Gastrocnemius medialis (tissue), 4 donors: ENCODE measurements at regions of chr1 and their contacts with region 1.

Region 1: GRCh38 chr1:56578963-56579875 is at the start of gene PLPP3:
- DNase-seq: peak; percentile 81 to 83
- ATAC-seq: peak; percentile 75 to 80
- H3K4me3 ChIP-seq: peak within 1 kb of the TSS; percentile 73 to 99 (median 88)
- H3K27ac ChIP-seq: peak within 1 kb of the TSS; percentile 86 to 95 (median 88)
- H3K4me1 ChIP-seq: peaks cover 29 to 35% of the 10 kb centered on the region in 2 donors
- H3K27me3 ChIP-seq: no peaks in the 10 kb centered on the region
- CTCF ChIP-seq: peak in 3 of 5 experiments; percentile 26 to 44 (median 38)
- POLR2A ChIP-seq: peak; percentile 75 to 91
- total RNA-seq, gene PLPP3: 53.2 to 71.5 (median 55.5) TPM

Region 2: DNA sequence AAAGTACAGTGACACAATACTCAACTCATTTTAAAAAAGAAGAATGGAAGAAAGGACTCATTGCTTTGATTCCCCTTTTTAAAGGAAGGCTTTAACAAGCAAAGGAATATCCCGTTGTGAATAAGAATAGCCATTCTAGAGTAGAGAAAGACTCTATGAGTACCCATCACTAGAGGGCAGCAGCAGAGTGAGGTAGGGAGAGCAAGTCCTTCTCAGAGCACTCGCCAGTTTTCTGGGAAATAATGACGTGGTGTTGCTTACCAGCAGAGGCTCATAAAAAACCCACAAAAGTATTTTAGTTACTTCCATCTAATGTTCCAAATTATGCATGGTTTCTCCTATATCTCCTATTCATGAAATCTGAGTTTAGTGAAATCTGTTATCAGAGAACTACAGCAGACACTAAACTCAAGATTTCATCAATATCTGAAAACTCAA is 1438.7 kb before region 1 on chr1:
- in situ Hi-C with region 1: loop called in 3 of 4 experiments (anchors 10 to 25 kb)
- intact Hi-C with region 1: no loop called
- DNase-seq: peak; percentile 64 to 65
- ATAC-seq: peak; percentile 87 to 96
- H3K4me3 ChIP-seq: no peak overlapping the region
- H3K27ac ChIP-seq: peak overlapping the region in 3 of 4 donors; percentile 40 to 48 (median 45)
- H3K4me1 ChIP-seq: peaks cover 0 to 4% of the 10 kb centered on the region in 2 donors
- H3K27me3 ChIP-seq: no peaks in the 10 kb centered on the region
- CTCF ChIP-seq: peak; percentile 69 to 91 (median 78)
- POLR2A ChIP-seq: no peak

Region 3: GRCh38 chr1:55474168-55474786 is 1104.9 kb before region 1 on chr1:
- in situ Hi-C with region 1: loop called in 1 of 4 experiments (anchors 25 kb)
- intact Hi-C with region 1: no loop called
- DNase-seq: no peak
- ATAC-seq: peak in 1 of 2 donors; percentile 53
- H3K4me3 ChIP-seq: no peak overlapping the region
- H3K27ac ChIP-seq: no peak overlapping the region
- H3K4me1 ChIP-seq: no peaks in the 10 kb centered on the region
- H3K27me3 ChIP-seq: no peaks in the 10 kb centered on the region
- CTCF ChIP-seq: no peak
- POLR2A ChIP-seq: no peak

Region 4: DNA sequence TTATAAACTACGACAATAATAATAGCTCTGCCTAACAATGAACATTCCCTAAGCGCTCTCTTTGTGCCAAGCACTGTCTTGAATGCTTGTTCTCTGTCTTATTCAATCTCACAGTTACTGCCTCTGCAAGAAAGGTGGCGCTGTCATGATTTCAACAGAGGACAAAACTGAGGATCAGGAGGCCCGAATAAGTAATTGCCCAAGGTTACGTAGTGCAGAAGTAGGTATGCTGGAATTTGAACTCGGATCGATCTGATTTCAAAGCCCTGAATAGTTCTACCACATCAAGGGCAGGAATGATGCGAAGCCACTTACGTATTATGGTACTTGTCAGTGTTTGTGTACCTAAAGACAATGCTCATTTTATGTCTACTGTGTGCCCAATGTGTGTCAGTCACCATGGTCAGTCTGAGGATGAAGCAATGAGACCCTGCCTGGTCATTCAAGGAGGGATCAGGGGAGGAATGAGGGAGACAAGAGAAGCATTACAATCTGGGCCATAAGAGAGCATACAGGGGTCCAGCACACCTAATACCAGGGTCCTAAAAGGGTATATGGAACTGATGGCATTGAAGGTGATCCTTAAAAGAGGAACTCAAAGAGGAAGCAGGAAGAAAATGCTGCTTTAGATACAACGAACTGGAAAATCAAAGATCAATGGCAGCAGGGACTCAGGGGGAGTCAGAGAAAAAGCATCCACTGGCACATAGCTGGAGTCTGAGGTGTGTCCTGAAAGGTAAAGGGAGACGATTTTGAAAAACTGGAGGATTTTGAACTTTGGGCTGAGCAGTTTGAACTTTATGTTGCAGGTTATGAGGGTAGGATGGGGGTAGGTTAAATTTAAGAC is 389.1 kb before region 1 on chr1:
- in situ Hi-C with region 1: no loop called
- intact Hi-C with region 1: loop called (anchors 5 kb)
- DNase-seq: peak in 1 of 2 donors; percentile 25
- ATAC-seq: peak; percentile 42 to 74
- H3K4me3 ChIP-seq: no peak overlapping the region
- H3K27ac ChIP-seq: peak overlapping the region in 3 of 4 donors; percentile 36 to 43 (median 37)
- H3K4me1 ChIP-seq: peaks cover 24 to 27% of the 10 kb centered on the region in 2 donors
- H3K27me3 ChIP-seq: no peaks in the 10 kb centered on the region
- CTCF ChIP-seq: peak in 4 of 5 experiments; percentile 16 to 54 (median 47)
- POLR2A ChIP-seq: no peak

Region 5: DNA sequence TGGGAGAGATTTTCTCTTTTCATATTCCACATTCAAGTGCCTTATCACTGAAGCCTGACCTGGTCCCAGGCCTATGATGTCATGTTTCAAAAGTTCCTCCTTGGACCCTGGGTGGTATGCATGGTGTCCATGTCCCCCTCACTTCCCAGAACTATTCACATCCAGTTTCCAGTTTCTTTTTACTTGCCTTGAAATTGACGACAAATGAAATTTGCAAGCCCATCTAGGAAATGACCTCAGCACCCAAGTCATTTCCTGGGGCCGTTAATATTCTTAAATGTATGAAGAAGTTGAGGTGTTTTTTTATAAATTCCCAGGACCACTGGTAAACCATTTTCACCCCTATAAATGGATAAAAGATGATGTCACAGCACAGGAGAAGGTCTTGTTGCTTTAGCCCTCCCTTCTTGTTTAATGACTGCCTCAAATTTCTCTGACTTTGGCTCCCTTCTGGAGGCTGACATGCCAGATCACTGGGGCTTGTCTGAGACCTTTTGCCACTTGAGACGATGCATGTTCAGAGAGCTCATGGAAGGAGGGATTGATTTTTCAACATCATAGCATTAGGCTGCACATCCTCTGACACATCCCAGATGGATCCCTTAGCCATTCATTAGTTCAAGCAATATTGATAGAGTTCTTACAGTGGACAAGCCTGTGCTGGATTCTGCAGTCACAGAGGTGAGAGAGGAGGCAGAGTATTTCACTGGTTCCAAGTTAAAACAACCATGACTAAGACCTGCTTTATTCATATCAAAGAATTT is 221.1 kb before region 1 on chr1:
- in situ Hi-C with region 1: no loop called
- intact Hi-C with region 1: loop called (anchors 5 kb)
- DNase-seq: no peak
- ATAC-seq: no peak
- H3K4me3 ChIP-seq: no peak overlapping the region
- H3K27ac ChIP-seq: peak overlapping the region; percentile 73 to 92 (median 82)
- H3K4me1 ChIP-seq: peaks cover 50 to 54% of the 10 kb centered on the region in 2 donors
- H3K27me3 ChIP-seq: no peaks in the 10 kb centered on the region
- CTCF ChIP-seq: no peak
- POLR2A ChIP-seq: no peak

Region 6: DNA sequence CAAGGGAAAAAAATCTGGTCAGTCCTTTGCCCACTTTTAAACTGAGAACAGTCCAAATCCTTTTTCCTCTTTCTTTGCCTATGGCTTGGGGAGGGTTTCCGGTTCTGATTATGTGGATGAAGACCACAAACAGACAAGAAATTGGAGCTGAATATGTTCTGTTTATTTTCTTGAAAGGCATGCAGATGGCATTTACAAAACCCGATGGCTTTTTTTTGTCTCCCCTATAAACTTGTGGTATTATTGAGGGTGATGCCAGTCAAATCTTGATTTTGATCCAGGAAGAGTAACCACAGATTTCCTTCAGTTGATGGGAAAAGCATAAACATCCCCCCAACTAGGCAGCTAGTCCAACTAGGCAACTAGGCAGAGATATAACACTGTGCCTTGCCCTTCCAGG is 38.8 kb before region 1 on chr1:
- in situ Hi-C with region 1: no loop called
- intact Hi-C with region 1: loop called (anchors 5 kb)
- DNase-seq: no peak
- ATAC-seq: no peak
- H3K4me3 ChIP-seq: no peak overlapping the region
- H3K27ac ChIP-seq: peak overlapping the region in 2 of 4 donors; percentile 34 to 49
- H3K4me1 ChIP-seq: peaks cover 66 to 74% of the 10 kb centered on the region in 2 donors
- H3K27me3 ChIP-seq: no peaks in the 10 kb centered on the region
- CTCF ChIP-seq: no peak
- POLR2A ChIP-seq: no peak